HepG2 (cell line): ENCODE measurements at regions of chr6 and their contacts with region 1.

Region 1: GRCh38 chr6:8063761-8064637 is at the start of gene BLOC1S5:
- DNase-seq: peak; percentile 99
- ATAC-seq: peak; percentile 95
- H3K4me3 ChIP-seq: peak within 1 kb of the TSS; percentile 74 to 93 (median 92)
- H3K27ac ChIP-seq: peak within 1 kb of the TSS; percentile 85
- H3K4me1 ChIP-seq: peaks cover 39% of the 10 kb centered on the region
- H3K27me3 ChIP-seq: no peaks in the 10 kb centered on the region; a peak in 1 of 5 replicates
- CTCF ChIP-seq: peak; percentile 60
- EP300 ChIP-seq: peak; percentile 23 to 56; a peak in 2 of 4 replicates
- POLR2A ChIP-seq: peak; percentile 87 to 95
- RAD21 ChIP-seq: peak; percentile 56; the same call in 1 of the 2 replicates
- total RNA-seq, gene BLOC1S5: 41.5 and 63.5 TPM in 2 replicates

Region 2: DNA sequence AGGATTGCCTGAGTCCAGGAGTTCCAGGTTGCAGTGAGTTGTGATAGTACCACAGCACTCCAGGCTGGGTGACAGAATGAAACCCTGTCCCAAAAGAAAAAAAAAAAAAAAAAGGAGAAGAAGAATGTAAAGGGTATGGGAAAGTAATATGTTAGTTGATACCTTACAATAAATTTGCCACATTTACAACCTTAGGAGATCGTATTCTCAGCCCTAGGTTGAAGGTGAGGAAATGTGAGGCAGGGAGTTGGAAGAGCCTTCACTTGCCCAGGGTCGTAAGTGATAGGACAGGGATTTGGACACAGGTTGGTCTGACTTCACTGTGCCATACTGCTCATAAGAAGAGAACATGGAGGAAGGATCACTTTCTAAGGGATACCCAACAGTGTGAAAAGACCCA is 269.5 kb before region 1 on chr6:
- CTCF ChIA-PET with region 1: no interaction called
- POLR2A ChIA-PET with region 1: no interaction called
- in situ Hi-C with region 1: no loop called
- intact Hi-C with region 1: no loop called
- DNase-seq: no peak
- ATAC-seq: no peak
- H3K4me3 ChIP-seq: no peak overlapping the region
- H3K27ac ChIP-seq: no peak overlapping the region
- H3K4me1 ChIP-seq: no peaks in the 10 kb centered on the region
- H3K27me3 ChIP-seq: peaks cover 2 to 26% of the 10 kb centered on the region in 2 experiments; a peak in 3 of 5 replicates
- CTCF ChIP-seq: no peak
- EP300 ChIP-seq: no peak
- POLR2A ChIP-seq: no peak
- RAD21 ChIP-seq: no peak

Region 3: GRCh38 chr6:7910654-7911344 is 153.2 kb before region 1 on chr6 and contains the start of gene TXNDC5:
- CTCF ChIA-PET with region 1: no interaction called
- POLR2A ChIA-PET with region 1: interaction called, 12 read pairs
- in situ Hi-C with region 1: no loop called
- intact Hi-C with region 1: loop called (anchors 5 kb)
- DNase-seq: peak; percentile 60
- ATAC-seq: peak; percentile 76
- H3K4me3 ChIP-seq: peak within 1 kb of the TSS; percentile 69 to 87 (median 85)
- H3K27ac ChIP-seq: peak within 1 kb of the TSS; percentile 75
- H3K4me1 ChIP-seq: peaks cover 83% of the 10 kb centered on the region
- H3K27me3 ChIP-seq: no peaks in the 10 kb centered on the region
- CTCF ChIP-seq: no peak; the same call in 1 of the 2 replicates
- EP300 ChIP-seq: no peak; a peak in 1 of 4 replicates
- POLR2A ChIP-seq: peak; percentile 49 to 83; a peak in 2 of 4 replicates
- RAD21 ChIP-seq: no peak
- total RNA-seq, gene TXNDC5: 376 and 578 TPM in 2 replicates

Region 4: GRCh38 chr6:8074213-8074612 is 10.2 kb after region 1 on chr6:
- CTCF ChIA-PET with region 1: no interaction called
- POLR2A ChIA-PET with region 1: interaction called, 11 read pairs
- in situ Hi-C with region 1: no loop called
- intact Hi-C with region 1: no loop called
- DNase-seq: no peak
- ATAC-seq: no peak
- H3K4me3 ChIP-seq: no peak overlapping the region
- H3K27ac ChIP-seq: no peak overlapping the region
- H3K4me1 ChIP-seq: peaks cover 14% of the 10 kb centered on the region
- H3K27me3 ChIP-seq: no peaks in the 10 kb centered on the region
- CTCF ChIP-seq: no peak
- EP300 ChIP-seq: no peak
- POLR2A ChIP-seq: no peak
- RAD21 ChIP-seq: no peak

Region 5: GRCh38 chr6:8102122-8102958 is 38.3 kb after region 1 on chr6 and contains the start of gene EEF1E1:
- CTCF ChIA-PET with region 1: interaction called, 3 read pairs
- POLR2A ChIA-PET with region 1: interaction called, 110 read pairs
- in situ Hi-C with region 1: no loop called
- intact Hi-C with region 1: loop called (anchors 1 kb)
- DNase-seq: peak; percentile 97
- ATAC-seq: peak; percentile 98
- H3K4me3 ChIP-seq: peak within 1 kb of the TSS; percentile 91 to 99 (median 93)
- H3K27ac ChIP-seq: peak within 1 kb of the TSS; percentile 79
- H3K4me1 ChIP-seq: peaks cover 41% of the 10 kb centered on the region
- H3K27me3 ChIP-seq: peaks cover 0 to 5% of the 10 kb centered on the region in 2 experiments; a peak in 1 of 5 replicates
- CTCF ChIP-seq: 0 out of 2 replicates have a peak, but pooled peaks have one; percentile 13
- EP300 ChIP-seq: peak; percentile 28 to 79; a peak in 3 of 4 replicates
- POLR2A ChIP-seq: peak; percentile 81 to 82
- RAD21 ChIP-seq: peak; percentile 61
- total RNA-seq, gene EEF1E1: 188 and 270 TPM in 2 replicates

Region 6: DNA sequence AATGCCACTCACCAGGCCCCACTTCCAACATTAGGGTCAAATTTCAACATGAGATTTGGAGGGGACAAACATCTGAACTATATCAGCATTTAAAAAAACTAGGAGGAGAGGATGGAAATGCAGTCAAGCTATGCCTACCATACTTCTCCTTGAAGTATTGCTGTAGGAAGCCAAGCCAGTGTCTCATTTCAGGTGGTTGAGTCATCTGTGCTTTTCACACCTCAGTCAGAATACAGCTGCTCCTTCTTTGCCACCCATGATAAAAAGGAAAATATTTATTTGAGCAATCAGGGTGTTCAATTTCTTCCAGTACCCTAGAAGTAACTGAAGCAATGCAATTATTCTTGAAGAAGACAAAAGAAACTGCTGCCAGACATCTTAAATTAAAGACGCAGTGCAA is 85.4 kb after region 1 on chr6:
- CTCF ChIA-PET with region 1: no interaction called
- POLR2A ChIA-PET with region 1: no interaction called
- in situ Hi-C with region 1: no loop called
- intact Hi-C with region 1: no loop called
- DNase-seq: no peak
- ATAC-seq: no peak
- H3K4me3 ChIP-seq: no peak overlapping the region
- H3K27ac ChIP-seq: no peak overlapping the region
- H3K4me1 ChIP-seq: no peaks in the 10 kb centered on the region
- H3K27me3 ChIP-seq: no peaks in the 10 kb centered on the region
- CTCF ChIP-seq: no peak
- EP300 ChIP-seq: no peak
- POLR2A ChIP-seq: no peak
- RAD21 ChIP-seq: no peak

Region 7: GRCh38 chr6:8219352-8219943 is 155.4 kb after region 1 on chr6:
- CTCF ChIA-PET with region 1: no interaction called
- POLR2A ChIA-PET with region 1: no interaction called
- in situ Hi-C with region 1: no loop called
- intact Hi-C with region 1: loop called (anchors 1 kb)
- DNase-seq: peak; percentile 53
- ATAC-seq: peak; percentile 69
- H3K4me3 ChIP-seq: no peak overlapping the region
- H3K27ac ChIP-seq: no peak overlapping the region
- H3K4me1 ChIP-seq: no peaks in the 10 kb centered on the region
- H3K27me3 ChIP-seq: no peaks in the 10 kb centered on the region
- CTCF ChIP-seq: peak; percentile 69
- EP300 ChIP-seq: no peak
- POLR2A ChIP-seq: no peak
- RAD21 ChIP-seq: 0 out of 2 replicates have a peak, but pooled peaks have one; percentile 23